ENCODE measurements at regions of chr12 and their contacts with region 1.

Region 1: GRCh38 chr12:94372461-94372860 is 87.2 kb downstream of the CEP83 start:
- DNase-seq: no peak
- ATAC-seq: peak; percentile 93
- H3K4me3 Mint-ChIP-seq: no peak overlapping the region
- H3K27ac Mint-ChIP-seq: peak overlapping the region; percentile 80
- H3K4me1 Mint-ChIP-seq: peaks cover 26% of the 10 kb centered on the region
- H3K27me3 Mint-ChIP-seq: no peaks in the 10 kb centered on the region

Region 2: GRCh38 chr12:93537769-93538168 is 834.7 kb before region 1 on chr12:
- CTCF ChIA-PET with region 1: no interaction called
- POLR2A ChIA-PET with region 1: no interaction called
- intact Hi-C with region 1: no loop called
- DNase-seq: no peak
- ATAC-seq: no peak
- H3K4me3 Mint-ChIP-seq: no peak overlapping the region
- H3K27ac Mint-ChIP-seq: no peak overlapping the region
- H3K4me1 Mint-ChIP-seq: peaks cover 9% of the 10 kb centered on the region
- H3K27me3 Mint-ChIP-seq: no peaks in the 10 kb centered on the region

Region 3: DNA sequence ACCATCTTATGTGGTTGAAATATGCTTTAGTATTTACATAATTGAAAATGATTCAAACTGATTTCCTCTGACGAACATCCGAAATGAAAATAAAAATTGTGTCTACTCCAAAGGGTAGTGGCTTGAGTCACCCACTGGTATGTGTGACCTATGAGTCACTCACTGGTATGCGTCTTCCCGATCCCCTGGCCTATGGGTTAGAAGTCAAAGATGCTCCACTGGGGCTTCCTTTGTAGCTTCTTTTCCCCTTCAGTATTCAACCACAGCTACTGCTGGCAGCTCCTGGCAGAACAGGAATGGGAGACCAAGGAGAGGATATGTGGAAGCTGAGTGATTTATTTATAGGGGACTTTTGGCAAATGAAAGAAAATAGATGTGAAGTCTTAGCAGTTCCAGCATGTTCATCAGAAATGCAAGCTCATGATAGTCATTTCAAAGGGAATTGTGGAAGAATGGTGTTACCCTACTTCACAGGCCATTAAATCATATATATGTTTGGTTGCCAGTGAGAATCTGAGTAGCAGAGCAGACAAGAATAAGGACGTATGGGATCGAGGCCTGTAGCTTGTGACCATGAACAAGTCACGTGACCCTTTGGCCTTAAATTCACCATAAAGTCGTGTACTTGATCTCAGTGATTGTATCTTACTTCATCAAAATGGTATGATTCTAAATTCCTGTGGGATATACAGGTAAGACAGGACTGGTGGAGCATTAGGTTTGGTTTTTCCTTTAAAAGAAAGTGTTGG is 587.0 kb before region 1 on chr12:
- CTCF ChIA-PET with region 1: no interaction called
- POLR2A ChIA-PET with region 1: no interaction called
- intact Hi-C with region 1: loop called in 1 of 2 experiments (anchors 5 kb)
- DNase-seq: peak; percentile 72
- ATAC-seq: peak; percentile 76
- H3K4me3 Mint-ChIP-seq: peak overlapping the region; percentile 20
- H3K27ac Mint-ChIP-seq: peak overlapping the region; percentile 87
- H3K4me1 Mint-ChIP-seq: peaks cover 70% of the 10 kb centered on the region
- H3K27me3 Mint-ChIP-seq: no peaks in the 10 kb centered on the region

Region 4: DNA sequence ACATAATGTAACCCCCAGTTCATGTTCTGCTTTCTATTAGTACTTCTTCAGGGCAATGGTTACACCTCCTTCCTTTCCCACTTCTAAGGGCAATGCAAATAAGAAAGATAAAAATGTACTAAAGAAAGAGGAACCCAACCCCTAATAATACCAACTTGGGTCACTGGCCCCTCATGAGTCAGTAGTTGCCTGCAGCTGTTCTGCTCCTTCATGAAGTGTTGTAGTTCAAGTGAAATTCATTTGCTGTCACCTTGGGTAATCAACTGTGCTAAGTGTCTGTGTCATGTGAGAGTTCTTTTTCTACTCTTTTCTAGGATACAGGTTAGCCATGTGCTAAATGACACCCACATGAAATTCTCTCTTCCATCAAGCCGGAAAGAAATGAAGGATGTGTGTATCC is 132.3 kb before region 1 on chr12:
- CTCF ChIA-PET with region 1: no interaction called
- POLR2A ChIA-PET with region 1: no interaction called
- intact Hi-C with region 1: no loop called
- DNase-seq: no peak
- ATAC-seq: no peak
- H3K4me3 Mint-ChIP-seq: no peak overlapping the region
- H3K27ac Mint-ChIP-seq: no peak overlapping the region
- H3K4me1 Mint-ChIP-seq: peaks cover 16% of the 10 kb centered on the region
- H3K27me3 Mint-ChIP-seq: no peaks in the 10 kb centered on the region

Region 5: DNA sequence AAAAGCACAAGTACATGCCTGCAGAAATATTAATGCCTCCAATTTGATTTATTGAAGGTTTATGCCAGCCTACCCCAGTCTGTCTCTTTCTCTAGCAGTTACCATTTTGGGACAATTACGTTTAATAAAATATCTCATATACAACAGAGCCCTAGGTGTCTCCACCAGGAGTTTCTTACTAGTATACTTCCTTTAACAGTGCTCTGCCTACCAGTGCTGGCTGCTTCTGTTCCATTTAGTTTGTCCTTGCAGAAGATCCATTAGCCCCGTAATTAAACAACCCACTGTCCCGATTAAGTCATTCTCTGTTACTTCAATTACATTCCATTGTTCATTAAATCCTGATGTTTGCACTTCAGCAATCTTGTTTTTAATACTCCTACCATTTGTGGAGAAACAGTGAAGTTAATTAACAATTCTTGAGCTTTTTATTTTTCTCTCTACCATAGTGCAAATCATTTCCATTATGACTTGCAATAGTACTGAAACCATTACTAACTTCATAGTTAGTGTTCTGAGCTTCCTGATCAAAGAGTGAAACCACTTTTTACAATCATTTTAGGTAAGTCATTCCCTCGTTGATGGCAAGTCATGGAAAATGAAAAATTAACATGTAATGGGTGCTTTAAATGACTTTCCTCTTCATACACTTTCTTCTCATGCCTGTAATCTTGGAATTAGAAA is 103.0 kb before region 1 on chr12:
- CTCF ChIA-PET with region 1: interaction called, 3 read pairs
- POLR2A ChIA-PET with region 1: no interaction called
- intact Hi-C with region 1: loop called (anchors 1 kb)
- DNase-seq: no peak
- ATAC-seq: peak; percentile 86
- H3K4me3 Mint-ChIP-seq: peak overlapping the region; percentile 24
- H3K27ac Mint-ChIP-seq: peak overlapping the region; percentile 63
- H3K4me1 Mint-ChIP-seq: peaks cover 63% of the 10 kb centered on the region
- H3K27me3 Mint-ChIP-seq: no peaks in the 10 kb centered on the region

Region 6: DNA sequence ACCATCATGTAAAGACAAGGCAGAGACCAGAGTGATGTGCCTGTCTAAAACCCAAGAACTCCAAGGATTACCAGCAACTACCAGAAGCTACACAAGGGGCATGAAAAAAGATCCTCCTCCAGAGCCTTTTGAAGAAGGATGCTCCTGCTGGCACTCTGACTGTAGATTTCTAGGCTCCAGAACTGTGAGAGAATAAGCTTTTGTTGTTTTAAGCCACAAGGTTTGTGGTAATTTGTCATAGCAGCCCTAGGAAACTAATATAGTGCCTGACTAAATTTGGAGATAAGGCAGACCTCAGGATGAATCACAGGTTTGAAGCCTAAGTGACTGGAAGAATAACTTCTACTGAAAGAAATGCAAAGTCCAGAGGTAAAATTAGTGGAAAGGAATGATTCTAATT is 45.7 kb before region 1 on chr12:
- CTCF ChIA-PET with region 1: no interaction called
- POLR2A ChIA-PET with region 1: no interaction called
- intact Hi-C with region 1: loop called (anchors 2 kb)
- DNase-seq: no peak
- ATAC-seq: peak; percentile 86
- H3K4me3 Mint-ChIP-seq: no peak overlapping the region
- H3K27ac Mint-ChIP-seq: no peak overlapping the region
- H3K4me1 Mint-ChIP-seq: peaks cover 19% of the 10 kb centered on the region
- H3K27me3 Mint-ChIP-seq: no peaks in the 10 kb centered on the region

Region 7: GRCh38 chr12:94459728-94460615 is 87.5 kb after region 1 on chr12 and contains the start of gene CEP83:
- CTCF ChIA-PET with region 1: no interaction called
- POLR2A ChIA-PET with region 1: interaction called, 3 read pairs
- intact Hi-C with region 1: loop called in 1 of 2 experiments (anchors 2 kb)
- DNase-seq: peak; percentile 98
- ATAC-seq: peak; percentile 99
- H3K4me3 Mint-ChIP-seq: peak within 1 kb of the TSS; percentile 96
- H3K27ac Mint-ChIP-seq: peak within 1 kb of the TSS; percentile 95
- H3K4me1 Mint-ChIP-seq: peaks cover 30% of the 10 kb centered on the region
- H3K27me3 Mint-ChIP-seq: peaks cover 10% of the 10 kb centered on the region
- total RNA-seq, gene CEP83: 21.9 to 22.6 TPM